ENCODE measurements at regions of chr9 and their contacts with region 1.

Region 1: DNA sequence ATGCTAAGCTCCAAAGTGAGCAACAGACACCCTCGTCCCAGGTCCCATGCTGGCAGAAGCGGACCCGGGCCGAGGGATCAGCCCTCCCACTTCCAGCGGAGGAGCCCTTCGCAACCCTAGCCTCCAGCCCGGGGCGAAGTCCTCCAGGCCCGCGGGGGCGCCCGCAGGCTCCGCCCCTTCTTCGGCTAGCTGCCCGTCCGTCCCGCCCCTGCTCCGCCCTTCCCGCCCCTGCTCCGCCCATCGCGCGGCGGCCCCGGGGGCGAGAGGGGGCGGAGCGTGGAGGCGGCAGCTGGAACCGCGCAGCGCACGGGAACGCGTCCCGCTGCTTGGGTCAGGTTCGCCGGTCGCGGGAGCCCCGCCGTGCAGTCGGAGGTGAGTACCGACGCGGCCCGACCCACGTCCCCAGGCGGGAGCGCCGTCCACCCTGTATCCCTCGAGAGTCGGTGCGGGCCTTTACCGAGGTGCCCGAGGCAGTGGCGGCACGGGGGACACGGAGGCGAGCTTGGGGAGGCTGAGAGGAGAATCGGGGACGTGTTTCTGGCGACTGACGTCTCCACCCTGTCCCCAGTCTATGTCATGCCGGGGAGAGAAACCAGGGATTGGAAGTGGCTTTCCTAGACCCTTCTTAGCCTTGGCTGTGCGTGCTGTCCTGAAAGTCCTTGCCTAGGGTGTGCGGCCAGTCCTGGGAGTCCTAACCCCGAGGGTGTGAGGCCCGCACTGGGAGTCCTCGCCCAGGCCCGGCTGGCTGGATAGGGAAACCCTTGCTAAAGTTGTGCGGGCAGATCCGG is at the start of gene ACO1:
- DNase-seq: peak; percentile 74 to 91 (median 83)
- ATAC-seq: peak; percentile 99
- H3K4me3 ChIP-seq: peak within 1 kb of the TSS; percentile 58
- H3K4me3 Mint-ChIP-seq: peak within 1 kb of the TSS; percentile 84 to 92 (median 88)
- H3K27ac ChIP-seq: peak within 1 kb of the TSS; percentile 70
- H3K27ac Mint-ChIP-seq: peak within 1 kb of the TSS in 8 of 9 donors; percentile 10 to 82 (median 58)
- H3K4me1 ChIP-seq: peaks cover 5 to 12% of the 10 kb centered on the region in 2 donors
- H3K4me1 Mint-ChIP-seq: peaks cover 13 to 29% (median 22%) of the 10 kb centered on the region in 7 donors
- H3K27me3 ChIP-seq: no peaks in the 10 kb centered on the region
- H3K27me3 Mint-ChIP-seq: peaks cover 0 to 31% (median 8%) of the 10 kb centered on the region in 5 donors
- total RNA-seq, gene ACO1: 4.7 to 10.5 (median 7.4) TPM

Region 2: DNA sequence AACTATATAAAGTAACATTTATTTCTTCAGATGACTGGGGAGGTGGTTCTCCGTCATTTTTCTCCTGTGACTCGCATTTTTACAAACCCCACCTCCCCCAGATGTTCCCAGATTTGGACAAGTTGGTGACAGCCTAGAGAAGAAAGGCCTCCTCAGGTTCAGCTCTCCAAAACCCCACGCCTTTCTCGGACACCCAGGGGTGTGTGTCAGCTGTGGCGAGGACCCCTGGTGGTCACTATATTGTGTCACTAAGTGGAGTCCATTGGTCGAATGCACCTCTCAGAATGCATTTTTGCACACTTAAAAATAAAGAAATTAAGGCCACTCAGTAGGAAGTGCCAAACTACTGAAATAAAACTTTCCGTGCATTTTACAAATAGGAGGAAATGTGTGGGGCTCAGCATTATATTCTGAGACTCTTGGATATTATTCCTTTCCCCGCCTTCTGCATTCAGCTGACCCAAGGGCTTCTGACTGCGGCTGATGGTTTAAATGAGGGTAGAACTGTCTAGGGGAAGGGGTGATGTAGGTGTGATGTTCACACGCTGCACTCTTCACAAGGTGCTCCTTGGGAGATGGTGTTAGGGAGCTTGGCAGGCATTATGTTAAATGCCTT is 47.5 kb after region 1 on chr9:
- CTCF ChIA-PET with region 1: interaction called, 45 read pairs
- POLR2A ChIA-PET with region 1: no interaction called
- intact Hi-C with region 1: loop called (anchors 1 to 2 kb)
- DNase-seq: peak; percentile 11 to 35 (median 22)
- ATAC-seq: peak; percentile 60
- H3K4me3 ChIP-seq: no peak overlapping the region
- H3K4me3 Mint-ChIP-seq: no peak overlapping the region
- H3K27ac ChIP-seq: no peak overlapping the region
- H3K27ac Mint-ChIP-seq: peak overlapping the region in 1 of 9 donors; percentile 71
- H3K4me1 ChIP-seq: no peaks in the 10 kb centered on the region
- H3K4me1 Mint-ChIP-seq: peaks cover 0 to 5% (median 0%) of the 10 kb centered on the region in 7 donors
- H3K27me3 ChIP-seq: no peaks in the 10 kb centered on the region
- H3K27me3 Mint-ChIP-seq: no peaks in the 10 kb centered on the region

Region 3: GRCh38 chr9:32571969-32572899 is 187.7 kb after region 1 on chr9:
- CTCF ChIA-PET with region 1: interaction called, 261 read pairs
- POLR2A ChIA-PET with region 1: interaction called, 16 read pairs
- intact Hi-C with region 1: loop called (anchors 1 kb)
- DNase-seq: peak; percentile 33 to 85 (median 77)
- ATAC-seq: peak; percentile 92
- H3K4me3 ChIP-seq: peak overlapping the region; percentile 92
- H3K4me3 Mint-ChIP-seq: peak overlapping the region; percentile 98 to 100 (median 99)
- H3K27ac ChIP-seq: peak overlapping the region; percentile 86
- H3K27ac Mint-ChIP-seq: peak overlapping the region; percentile 93 to 99 (median 99)
- H3K4me1 ChIP-seq: peaks cover 14 to 22% of the 10 kb centered on the region in 2 donors
- H3K4me1 Mint-ChIP-seq: peaks cover 18 to 43% (median 30%) of the 10 kb centered on the region in 7 donors
- H3K27me3 ChIP-seq: no peaks in the 10 kb centered on the region
- H3K27me3 Mint-ChIP-seq: peaks cover 0 to 10% (median 0%) of the 10 kb centered on the region in 5 donors

Region 4: DNA sequence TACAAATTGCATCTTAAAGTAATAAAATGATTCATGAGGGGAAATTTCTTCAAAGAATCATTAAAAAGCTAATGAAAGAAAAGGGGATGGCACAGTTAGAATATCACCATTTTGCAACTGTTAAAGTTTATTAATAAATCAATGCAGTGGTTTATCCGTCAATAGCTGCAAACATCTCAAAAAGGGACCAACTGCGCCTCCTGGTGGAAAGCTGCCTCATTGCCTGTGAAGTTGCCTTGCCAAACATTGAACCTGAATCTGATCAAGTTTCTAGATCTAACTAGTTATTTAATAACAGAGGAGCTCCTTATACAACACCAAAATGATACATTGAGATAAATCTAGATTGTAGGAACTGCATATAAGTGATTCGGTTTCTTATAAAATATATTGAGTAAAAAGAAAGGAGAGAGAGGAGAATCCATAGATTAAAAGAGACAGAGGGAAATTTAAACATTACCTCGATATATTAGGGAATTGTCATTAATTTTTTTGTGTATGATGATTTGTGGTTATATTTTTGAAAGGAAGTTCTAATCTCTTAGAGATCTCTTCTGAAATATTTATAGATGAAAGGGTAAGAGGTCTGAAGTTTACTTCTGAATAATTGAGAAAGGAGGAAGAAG is 195.3 kb after region 1 on chr9:
- CTCF ChIA-PET with region 1: interaction called, 261 read pairs
- POLR2A ChIA-PET with region 1: interaction called, 16 read pairs
- intact Hi-C with region 1: loop called (anchors 1 kb)
- DNase-seq: peak; percentile 53 to 77 (median 66)
- ATAC-seq: peak; percentile 81
- H3K4me3 ChIP-seq: no peak overlapping the region
- H3K4me3 Mint-ChIP-seq: no peak overlapping the region
- H3K27ac ChIP-seq: no peak overlapping the region
- H3K27ac Mint-ChIP-seq: peak overlapping the region in 1 of 9 donors; percentile 48
- H3K4me1 ChIP-seq: no peaks in the 10 kb centered on the region
- H3K4me1 Mint-ChIP-seq: peaks cover 0 to 8% (median 0%) of the 10 kb centered on the region in 7 donors
- H3K27me3 ChIP-seq: no peaks in the 10 kb centered on the region
- H3K27me3 Mint-ChIP-seq: peaks cover 4 to 30% (median 7%) of the 10 kb centered on the region in 5 donors

Region 5: DNA sequence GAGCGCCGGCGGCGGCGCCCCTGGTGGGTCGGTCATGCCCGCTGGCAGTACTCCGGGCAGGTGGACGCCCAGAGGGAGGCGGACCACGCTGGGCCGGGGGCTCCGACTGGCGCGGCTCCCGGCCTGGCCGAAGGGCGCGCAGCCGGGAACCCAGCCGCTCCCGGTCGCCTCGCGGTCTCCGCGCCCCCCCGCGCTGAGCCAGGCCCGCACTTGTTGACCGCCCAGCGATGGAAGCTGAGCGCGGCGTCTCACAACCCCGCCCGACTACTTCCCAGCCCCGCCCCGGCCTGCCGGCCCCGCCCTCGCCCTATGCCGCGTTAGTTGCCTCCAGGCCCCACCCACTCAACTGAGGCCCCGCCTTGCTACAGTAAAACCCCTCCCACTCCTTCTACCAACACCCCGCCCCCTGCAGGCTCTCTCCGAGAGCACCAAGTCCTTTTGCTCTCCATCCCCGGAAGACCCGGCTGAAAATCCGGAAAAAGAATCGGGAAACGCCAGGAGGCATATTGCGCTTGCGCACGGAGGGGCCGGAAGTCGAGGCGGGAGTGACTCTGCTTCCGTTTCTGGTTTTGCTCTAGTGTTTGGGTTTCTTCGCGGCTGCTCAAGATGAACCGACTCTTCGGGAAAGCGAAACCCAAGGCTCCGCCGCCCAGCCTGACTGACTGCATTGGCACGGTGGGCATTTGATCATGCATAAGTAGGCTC is 880.1 kb after region 1 on chr9 and contains the starts of genes BAG1 and CHMP5:
- CTCF ChIA-PET with region 1: no interaction called
- POLR2A ChIA-PET with region 1: no interaction called
- intact Hi-C with region 1: loop called in 1 of 2 experiments (anchors 10 kb)
- DNase-seq: peak; percentile 98 to 100 (median 100)
- ATAC-seq: peak; percentile 99
- H3K4me3 ChIP-seq: peak within 1 kb of the TSS; percentile 95
- H3K4me3 Mint-ChIP-seq: peak within 1 kb of the TSS; percentile 82 to 98 (median 92)
- H3K27ac ChIP-seq: peak within 1 kb of the TSS; percentile 88
- H3K27ac Mint-ChIP-seq: peak within 1 kb of the TSS; percentile 84 to 99 (median 97)
- H3K4me1 ChIP-seq: peaks cover 15 to 34% of the 10 kb centered on the region in 2 donors
- H3K4me1 Mint-ChIP-seq: peaks cover 36 to 66% (median 55%) of the 10 kb centered on the region in 7 donors
- H3K27me3 ChIP-seq: no peaks in the 10 kb centered on the region
- H3K27me3 Mint-ChIP-seq: peaks cover 0 to 2% (median 0%) of the 10 kb centered on the region in 5 donors
- total RNA-seq, gene BAG1: 48.6 to 77.2 (median 61.0) TPM
- total RNA-seq, gene CHMP5: 21.4 to 74.6 (median 35.3) TPM

Measured in naive thymus-derived CD4-positive, alpha-beta T cell (primary cell).